CD8-positive, alpha-beta T cell (primary cell): ENCODE measurements at regions of chr10 and their contacts with region 1.

Region 1: GRCh38 chr10:91908337-91909116 is 759 bp downstream of the FGFBP3 start:
- DNase-seq: peak; percentile 47 to 87 (median 70)
- ATAC-seq: peak; percentile 79
- H3K4me3 ChIP-seq: peak overlapping the region; percentile 51 to 82
- H3K4me3 Mint-ChIP-seq: peak overlapping the region; percentile 88
- H3K27ac ChIP-seq: peak overlapping the region; percentile 39 to 73
- H3K27ac Mint-ChIP-seq: peak overlapping the region; percentile 83
- H3K4me1 ChIP-seq: peaks cover 15% of the 10 kb centered on the region
- H3K4me1 Mint-ChIP-seq: peaks cover 28% of the 10 kb centered on the region
- H3K27me3 ChIP-seq: no peaks in the 10 kb centered on the region
- H3K27me3 Mint-ChIP-seq: peaks cover 3% of the 10 kb centered on the region
- CTCF ChIP-seq: peak; percentile 52

Region 2: DNA sequence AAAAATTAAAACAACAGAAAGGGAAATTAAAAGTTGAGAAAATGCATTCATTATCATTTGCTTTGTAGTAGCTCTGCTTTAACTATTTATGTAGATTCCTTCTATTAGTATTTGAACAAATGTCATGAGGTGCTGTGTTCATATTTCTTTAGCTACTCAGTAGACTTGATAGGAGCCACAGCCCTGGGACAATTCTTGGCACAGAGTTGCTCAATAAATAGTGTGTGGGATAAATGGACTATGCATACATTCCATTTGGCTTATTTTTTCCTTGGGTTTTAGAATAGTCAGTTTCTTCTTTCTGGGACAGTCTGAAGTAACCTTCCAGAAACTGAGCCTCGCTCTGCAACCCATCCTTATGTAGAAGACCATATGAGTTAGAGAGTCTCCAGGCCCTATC is 1023.4 kb before region 1 on chr10:
- CTCF ChIA-PET with region 1: no interaction called
- POLR2A ChIA-PET with region 1: no interaction called
- intact Hi-C with region 1: loop called in 1 of 2 experiments (anchors 2 kb)
- DNase-seq: no peak
- ATAC-seq: no peak
- H3K4me3 ChIP-seq: no peak overlapping the region
- H3K4me3 Mint-ChIP-seq: no peak overlapping the region
- H3K27ac ChIP-seq: no peak overlapping the region
- H3K27ac Mint-ChIP-seq: no peak overlapping the region
- H3K4me1 ChIP-seq: no peaks in the 10 kb centered on the region
- H3K4me1 Mint-ChIP-seq: no peaks in the 10 kb centered on the region
- H3K27me3 ChIP-seq: no peaks in the 10 kb centered on the region
- H3K27me3 Mint-ChIP-seq: no peaks in the 10 kb centered on the region
- CTCF ChIP-seq: no peak

Region 3: DNA sequence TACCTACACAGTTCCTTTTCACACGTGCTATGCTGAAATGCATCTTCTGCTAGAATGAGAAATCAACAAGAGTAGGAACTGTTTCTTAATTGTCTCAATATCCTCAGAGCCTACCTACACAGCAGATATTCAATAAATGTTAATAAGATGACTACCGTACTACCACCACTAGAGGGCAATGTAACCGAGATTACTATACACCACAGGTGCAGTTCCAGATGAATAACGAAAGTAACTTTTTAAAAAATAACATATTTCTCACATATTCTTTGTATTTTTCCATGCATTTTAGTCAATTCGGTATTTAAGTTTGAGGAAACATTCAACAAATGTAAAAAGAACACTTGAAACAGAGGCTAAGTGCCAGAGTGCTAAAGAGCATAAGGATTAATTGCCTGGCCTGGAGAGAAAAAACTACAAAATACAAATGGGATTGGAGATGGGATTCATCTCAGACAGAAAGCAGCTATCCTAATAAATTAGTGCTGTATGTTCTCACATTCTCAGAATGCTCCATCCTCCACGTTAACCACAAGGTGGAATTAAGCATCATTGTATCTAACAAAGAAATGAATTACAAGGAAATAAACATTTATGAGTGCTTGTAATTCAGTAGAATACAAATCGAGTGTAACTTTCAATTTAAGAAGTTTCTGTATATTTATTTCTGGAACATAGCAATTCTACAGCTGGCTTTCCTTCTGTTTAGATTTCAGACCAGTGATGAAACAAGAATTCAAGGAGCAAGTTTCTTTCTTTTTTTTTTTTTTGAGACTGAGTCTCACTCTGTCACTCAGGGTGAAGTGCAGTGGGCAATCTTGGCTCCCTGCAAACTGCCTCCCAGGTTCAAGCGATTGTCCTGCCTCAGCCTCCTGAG is 518.7 kb before region 1 on chr10:
- CTCF ChIA-PET with region 1: interaction called, 14 read pairs
- POLR2A ChIA-PET with region 1: no interaction called
- intact Hi-C with region 1: loop called (anchors 2 kb)
- DNase-seq: peak in 3 of 9 experiments; percentile 27 to 84 (median 77)
- ATAC-seq: peak; percentile 99
- H3K4me3 ChIP-seq: no peak overlapping the region
- H3K4me3 Mint-ChIP-seq: peak overlapping the region; percentile 42
- H3K27ac ChIP-seq: no peak overlapping the region
- H3K27ac Mint-ChIP-seq: no peak overlapping the region
- H3K4me1 ChIP-seq: peaks cover 4% of the 10 kb centered on the region
- H3K4me1 Mint-ChIP-seq: peaks cover 8% of the 10 kb centered on the region
- H3K27me3 ChIP-seq: no peaks in the 10 kb centered on the region
- H3K27me3 Mint-ChIP-seq: peaks cover 14% of the 10 kb centered on the region
- CTCF ChIP-seq: peak; percentile 75

Region 4: GRCh38 chr10:91643700-91644099 is 264.8 kb before region 1 on chr10:
- CTCF ChIA-PET with region 1: no interaction called
- POLR2A ChIA-PET with region 1: no interaction called
- intact Hi-C with region 1: loop called in 1 of 2 experiments (anchors 5 kb)
- DNase-seq: peak in 1 of 9 experiments; percentile 4
- ATAC-seq: no peak
- H3K4me3 ChIP-seq: no peak overlapping the region
- H3K4me3 Mint-ChIP-seq: no peak overlapping the region
- H3K27ac ChIP-seq: no peak overlapping the region
- H3K27ac Mint-ChIP-seq: no peak overlapping the region
- H3K4me1 ChIP-seq: no peaks in the 10 kb centered on the region
- H3K4me1 Mint-ChIP-seq: no peaks in the 10 kb centered on the region
- H3K27me3 ChIP-seq: no peaks in the 10 kb centered on the region
- H3K27me3 Mint-ChIP-seq: peaks cover 32% of the 10 kb centered on the region
- CTCF ChIP-seq: no peak

Region 5: GRCh38 chr10:91856637-91857036 is 51.9 kb before region 1 on chr10:
- CTCF ChIA-PET with region 1: interaction called, 5 read pairs
- POLR2A ChIA-PET with region 1: no interaction called
- intact Hi-C with region 1: loop called (anchors 1 kb)
- DNase-seq: peak in 3 of 9 experiments; percentile 19 to 34 (median 34)
- ATAC-seq: no peak
- H3K4me3 ChIP-seq: no peak overlapping the region
- H3K4me3 Mint-ChIP-seq: no peak overlapping the region
- H3K27ac ChIP-seq: no peak overlapping the region
- H3K27ac Mint-ChIP-seq: no peak overlapping the region
- H3K4me1 ChIP-seq: no peaks in the 10 kb centered on the region
- H3K4me1 Mint-ChIP-seq: no peaks in the 10 kb centered on the region
- H3K27me3 ChIP-seq: no peaks in the 10 kb centered on the region
- H3K27me3 Mint-ChIP-seq: no peaks in the 10 kb centered on the region
- CTCF ChIP-seq: no peak

Region 6: GRCh38 chr10:92142512-92142911 is 234.0 kb after region 1 on chr10:
- CTCF ChIA-PET with region 1: no interaction called
- POLR2A ChIA-PET with region 1: no interaction called
- intact Hi-C with region 1: no loop called
- DNase-seq: no peak
- ATAC-seq: no peak
- H3K4me3 ChIP-seq: no peak overlapping the region
- H3K4me3 Mint-ChIP-seq: no peak overlapping the region
- H3K27ac ChIP-seq: no peak overlapping the region
- H3K27ac Mint-ChIP-seq: no peak overlapping the region
- H3K4me1 ChIP-seq: no peaks in the 10 kb centered on the region
- H3K4me1 Mint-ChIP-seq: peaks cover 4% of the 10 kb centered on the region
- H3K27me3 ChIP-seq: no peaks in the 10 kb centered on the region
- H3K27me3 Mint-ChIP-seq: no peaks in the 10 kb centered on the region
- CTCF ChIP-seq: no peak

Region 7: DNA sequence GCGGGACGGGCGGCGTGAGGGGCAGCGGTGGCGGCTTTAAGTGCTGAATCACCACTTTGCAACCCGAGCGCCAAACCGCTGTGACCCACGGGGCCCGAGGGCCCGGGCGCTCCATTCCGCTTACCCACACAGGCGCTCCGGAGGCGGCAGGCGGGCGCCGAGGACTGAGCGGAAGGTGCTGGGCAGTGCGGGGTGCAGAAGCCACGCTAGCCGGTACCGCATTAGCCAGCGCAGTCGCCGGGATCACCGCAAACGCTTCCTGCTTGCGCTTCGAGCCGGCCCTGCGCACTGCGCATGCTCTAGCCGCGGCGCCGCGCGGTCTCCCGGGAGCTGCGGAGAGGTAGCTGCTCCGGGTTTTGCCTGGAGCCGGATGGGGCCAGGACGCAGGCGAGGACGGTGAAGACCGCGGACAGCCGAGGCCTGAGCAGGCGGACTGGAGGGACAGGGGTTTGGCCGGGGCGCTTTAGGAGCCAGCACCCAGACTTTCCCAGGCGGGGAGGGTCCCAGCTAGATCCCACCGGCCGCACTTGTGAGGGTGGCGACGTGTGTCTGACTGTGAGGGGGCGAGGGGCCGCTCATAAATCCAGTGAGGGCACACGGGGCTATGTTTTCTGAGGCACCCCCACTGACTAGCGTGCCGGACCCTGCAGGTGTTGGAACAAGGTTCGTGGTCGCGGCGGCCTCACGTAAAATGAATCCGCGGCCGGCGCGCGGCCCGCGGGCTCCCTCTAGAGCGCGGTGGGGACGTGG is 665.4 kb after region 1 on chr10 and contains the start of gene IDE:
- CTCF ChIA-PET with region 1: no interaction called
- POLR2A ChIA-PET with region 1: interaction called, 3 read pairs
- intact Hi-C with region 1: loop called in 1 of 2 experiments (anchors 5 kb)
- DNase-seq: peak; percentile 43 to 89 (median 76)
- ATAC-seq: peak; percentile 70
- H3K4me3 ChIP-seq: peak within 1 kb of the TSS; percentile 85 to 100
- H3K4me3 Mint-ChIP-seq: peak within 1 kb of the TSS; percentile 93
- H3K27ac ChIP-seq: peak within 1 kb of the TSS; percentile 74 to 92
- H3K27ac Mint-ChIP-seq: peak within 1 kb of the TSS; percentile 93
- H3K4me1 ChIP-seq: peaks cover 18% of the 10 kb centered on the region
- H3K4me1 Mint-ChIP-seq: peaks cover 42% of the 10 kb centered on the region
- H3K27me3 ChIP-seq: no peaks in the 10 kb centered on the region
- H3K27me3 Mint-ChIP-seq: no peaks in the 10 kb centered on the region
- CTCF ChIP-seq: no peak
- total RNA-seq, gene IDE: 12.1 to 13.2 TPM